ENCODE measurements at regions of chr2 and their contacts with region 1.

Region 1: GRCh38 chr2:25201265-25201664 is 32.9 kb upstream of the POMC start:
- DNase-seq: no peak
- H3K4me3 Mint-ChIP-seq: no peak overlapping the region
- H3K27ac Mint-ChIP-seq: no peak overlapping the region
- H3K4me1 Mint-ChIP-seq: peaks cover 5% of the 10 kb centered on the region
- H3K27me3 Mint-ChIP-seq: peaks cover 13% of the 10 kb centered on the region

Region 2: GRCh38 chr2:24409700-24410556 is 791.3 kb before region 1 on chr2:
- intact Hi-C with region 1: loop called (anchors 5 kb)
- DNase-seq: peak; percentile 82
- H3K4me3 Mint-ChIP-seq: no peak overlapping the region
- H3K27ac Mint-ChIP-seq: no peak overlapping the region
- H3K4me1 Mint-ChIP-seq: peaks cover 2% of the 10 kb centered on the region
- H3K27me3 Mint-ChIP-seq: peaks cover 4% of the 10 kb centered on the region

Region 3: GRCh38 chr2:25165992-25166875 is 35.0 kb before region 1 on chr2:
- intact Hi-C with region 1: loop called (anchors 1 kb)
- DNase-seq: peak; percentile 82
- H3K4me3 Mint-ChIP-seq: no peak overlapping the region
- H3K27ac Mint-ChIP-seq: no peak overlapping the region
- H3K4me1 Mint-ChIP-seq: peaks cover 17% of the 10 kb centered on the region
- H3K27me3 Mint-ChIP-seq: peaks cover 48% of the 10 kb centered on the region